Dendritic cell treated with granulocyte-macrophage colony-stimulating factor and Interleukin-4, amounts not matched to agents 40 ng/mL and 50 ng/mL, for 4 days (primary cell): ENCODE measurements at regions of chr12 and their contacts with region 1.

Region 1: DNA sequence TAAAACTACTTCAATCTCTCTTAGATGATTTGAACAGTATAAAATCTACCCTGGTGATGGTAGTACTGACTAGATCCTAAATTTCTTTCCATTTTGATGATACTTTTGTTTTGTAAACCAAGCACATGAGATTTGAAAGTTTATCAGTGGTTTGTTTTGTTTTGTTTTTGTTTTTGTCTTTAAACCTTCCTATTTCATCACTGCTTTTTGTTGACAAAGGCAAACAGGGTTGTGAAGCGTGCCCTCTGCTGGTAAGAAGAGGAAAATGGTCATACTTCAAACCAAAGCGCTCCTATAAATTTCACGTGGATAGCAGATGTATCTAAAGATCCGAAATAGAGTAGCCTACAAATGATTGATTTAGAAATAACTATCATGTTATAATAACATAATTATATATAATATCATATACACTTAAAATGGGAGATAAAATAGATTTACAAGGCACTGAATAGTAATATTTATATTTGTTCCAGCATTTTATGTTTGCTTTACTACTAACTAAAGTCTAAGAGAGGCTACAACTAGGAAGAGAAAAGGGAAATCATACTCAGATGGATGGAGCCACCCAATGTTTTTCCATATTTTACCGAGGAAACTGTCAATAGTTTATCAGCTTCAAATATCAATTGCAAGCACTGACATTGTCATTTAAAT is 254.0 kb upstream of the USP15 start:
- H3K4me3 Mint-ChIP-seq: no peak overlapping the region
- H3K27ac Mint-ChIP-seq: peak overlapping the region; percentile 62
- H3K4me1 Mint-ChIP-seq: peaks cover 5% of the 10 kb centered on the region
- H3K27me3 Mint-ChIP-seq: no peaks in the 10 kb centered on the region

Region 2: GRCh38 chr12:62113366-62114011 is 107.3 kb after region 1 on chr12:
- intact Hi-C with region 1: no loop called
- H3K4me3 Mint-ChIP-seq: no peak overlapping the region
- H3K27ac Mint-ChIP-seq: no peak overlapping the region
- H3K4me1 Mint-ChIP-seq: no peaks in the 10 kb centered on the region
- H3K27me3 Mint-ChIP-seq: no peaks in the 10 kb centered on the region

Region 3: DNA sequence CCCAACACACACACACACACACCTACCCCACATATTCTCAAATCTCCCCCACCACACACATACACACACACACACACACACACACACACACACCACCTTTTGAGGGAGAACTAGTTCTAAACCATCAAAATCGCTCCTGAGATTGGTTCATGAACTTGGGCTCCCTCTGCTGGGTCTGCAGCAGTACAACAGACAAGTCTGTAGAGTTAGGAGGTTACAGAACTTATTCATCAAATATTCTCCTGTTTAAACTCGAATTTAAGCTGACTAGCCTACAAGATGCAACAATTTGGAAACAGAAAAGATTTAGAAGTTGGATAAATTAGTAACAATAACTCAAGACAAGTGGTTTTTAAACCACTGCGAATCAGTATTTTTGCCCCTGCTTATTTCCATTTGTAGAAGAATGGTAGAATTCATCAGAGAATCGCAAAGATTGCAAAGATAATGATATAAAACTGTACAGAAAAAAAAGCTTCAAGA is 117.6 kb after region 1 on chr12:
- intact Hi-C with region 1: loop called (anchors 10 kb)
- H3K4me3 Mint-ChIP-seq: no peak overlapping the region
- H3K27ac Mint-ChIP-seq: no peak overlapping the region
- H3K4me1 Mint-ChIP-seq: peaks cover 14% of the 10 kb centered on the region
- H3K27me3 Mint-ChIP-seq: peaks cover 2% of the 10 kb centered on the region

Region 4: DNA sequence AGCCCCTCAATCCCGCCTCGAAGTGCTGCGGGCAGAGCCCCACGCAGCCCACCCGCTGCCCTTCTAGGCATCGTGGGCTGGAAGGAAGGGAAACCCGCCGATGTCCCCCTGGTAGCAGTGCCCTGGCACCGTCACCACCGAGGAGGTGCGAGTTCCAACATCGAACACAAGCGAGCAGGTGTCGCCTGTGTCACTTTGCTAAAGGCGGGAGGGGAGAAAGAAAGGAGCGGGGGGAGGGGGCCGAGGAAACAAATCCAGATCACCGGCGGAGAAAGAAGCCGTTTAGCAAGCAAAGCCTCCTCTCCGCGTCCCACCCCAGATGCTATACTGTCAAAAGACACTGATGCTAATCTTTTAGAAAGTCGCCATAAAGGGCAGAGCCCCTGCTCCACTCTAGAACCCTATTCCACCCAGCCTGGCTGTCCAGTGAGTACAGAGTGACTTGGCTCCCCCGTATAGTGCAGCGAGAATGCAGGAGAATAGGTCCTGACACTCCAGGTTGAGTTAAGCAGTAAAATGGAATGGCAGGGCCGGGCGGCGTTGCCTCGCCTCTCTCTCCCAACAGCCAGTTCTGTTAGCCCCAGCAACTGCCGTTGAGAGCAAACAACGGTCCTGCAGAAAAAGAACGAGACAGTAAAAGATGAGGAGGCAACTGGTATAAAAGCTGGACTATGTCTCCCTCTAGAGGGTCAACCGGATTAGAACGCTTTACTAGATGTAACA is 186.1 kb after region 1 on chr12:
- intact Hi-C with region 1: loop called (anchors 5 kb)
- H3K4me3 Mint-ChIP-seq: peak overlapping the region; percentile 81
- H3K27ac Mint-ChIP-seq: peak overlapping the region; percentile 51
- H3K4me1 Mint-ChIP-seq: peaks cover 30% of the 10 kb centered on the region
- H3K27me3 Mint-ChIP-seq: peaks cover 31% of the 10 kb centered on the region